Activated T-helper 2 cell treated with anti-CD3 and anti-CD28 coated beads, Interferon-gamma antibody, Interleukin-2, Interleukin-4, amounts not matched to agents 10 μg/mL and 5 μg/mL and 100 μg/mL, durations not matched to agents 14 hours and 24 hours and 36 hours (primary cell): ENCODE measurements at regions of chr6 and their contacts with region 1.

Region 1: DNA sequence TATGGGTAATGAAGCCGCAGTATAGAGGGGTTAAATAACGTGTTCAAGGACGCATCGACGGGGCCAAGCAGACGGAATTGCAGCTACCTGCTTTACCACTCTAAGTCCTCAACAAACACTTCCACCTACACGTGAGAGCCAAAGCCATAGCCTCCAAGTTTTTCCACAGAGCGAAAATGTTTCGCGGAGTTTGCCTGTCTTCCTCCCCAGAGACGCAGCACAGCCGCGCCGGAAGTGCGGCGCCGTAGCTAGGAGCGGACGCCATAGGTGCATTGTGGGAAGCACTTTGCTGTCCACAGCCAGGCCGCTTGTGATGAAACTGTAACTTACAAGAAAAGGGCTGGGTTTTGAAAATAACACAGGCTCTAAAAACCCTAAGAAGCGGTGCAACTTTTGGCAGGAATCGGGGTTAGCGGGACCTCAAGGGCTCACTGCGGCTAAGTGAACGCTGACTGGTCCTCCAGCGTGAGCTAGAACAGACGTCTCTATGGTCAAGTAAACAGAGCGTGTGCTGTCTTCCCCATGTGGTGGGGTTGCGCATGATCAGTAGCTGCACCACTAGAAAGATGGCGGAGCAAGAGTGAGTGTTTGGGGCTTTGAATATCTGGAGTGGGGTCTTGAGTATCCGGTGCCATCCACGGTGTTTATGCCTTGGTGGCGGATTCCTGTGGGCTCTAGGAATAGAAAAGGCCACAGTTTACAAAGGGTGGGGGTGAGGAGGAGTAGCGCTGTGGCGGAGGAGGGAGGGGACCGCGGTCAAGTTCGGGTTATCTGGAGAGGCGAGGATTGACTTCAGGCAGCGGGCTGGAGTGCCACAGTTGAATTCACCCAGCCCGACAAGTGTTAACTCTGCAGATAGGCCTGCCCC is at the start of gene RPL7L1:
- DNase-seq: peak; percentile 84
- H3K4me3 Mint-ChIP-seq: peak within 1 kb of the TSS; percentile 94
- H3K27ac Mint-ChIP-seq: peak within 1 kb of the TSS; percentile 98
- H3K4me1 Mint-ChIP-seq: peaks cover 6% of the 10 kb centered on the region
- H3K27me3 Mint-ChIP-seq: no peaks in the 10 kb centered on the region
- total RNA-seq, gene RPL7L1: 149 and 151 TPM in 2 replicates

Region 2: GRCh38 chr6:42563697-42564505 is 315.7 kb before region 1 on chr6 and contains the start of gene UBR2:
- intact Hi-C with region 1: loop called (anchors 2 kb)
- DNase-seq: peak; percentile 91
- H3K4me3 Mint-ChIP-seq: peak within 1 kb of the TSS; percentile 93
- H3K27ac Mint-ChIP-seq: peak within 1 kb of the TSS; percentile 87
- H3K4me1 Mint-ChIP-seq: peaks cover 26% of the 10 kb centered on the region
- H3K27me3 Mint-ChIP-seq: peaks cover 2% of the 10 kb centered on the region
- total RNA-seq, gene UBR2: 28.6 and 29.6 TPM in 2 replicates

Region 3: GRCh38 chr6:42661540-42662153 is 218.0 kb before region 1 on chr6:
- intact Hi-C with region 1: loop called (anchors 1 kb)
- DNase-seq: peak; percentile 74
- H3K4me3 Mint-ChIP-seq: no peak overlapping the region
- H3K27ac Mint-ChIP-seq: no peak overlapping the region
- H3K4me1 Mint-ChIP-seq: peaks cover 3% of the 10 kb centered on the region
- H3K27me3 Mint-ChIP-seq: no peaks in the 10 kb centered on the region

Region 4: GRCh38 chr6:42726485-42727086 is 153.0 kb before region 1 on chr6:
- intact Hi-C with region 1: loop called (anchors 1 kb)
- DNase-seq: peak; percentile 61
- H3K4me3 Mint-ChIP-seq: peak overlapping the region; percentile 81
- H3K27ac Mint-ChIP-seq: peak overlapping the region; percentile 98
- H3K4me1 Mint-ChIP-seq: peaks cover 19% of the 10 kb centered on the region
- H3K27me3 Mint-ChIP-seq: peaks cover 6% of the 10 kb centered on the region

Region 5: DNA sequence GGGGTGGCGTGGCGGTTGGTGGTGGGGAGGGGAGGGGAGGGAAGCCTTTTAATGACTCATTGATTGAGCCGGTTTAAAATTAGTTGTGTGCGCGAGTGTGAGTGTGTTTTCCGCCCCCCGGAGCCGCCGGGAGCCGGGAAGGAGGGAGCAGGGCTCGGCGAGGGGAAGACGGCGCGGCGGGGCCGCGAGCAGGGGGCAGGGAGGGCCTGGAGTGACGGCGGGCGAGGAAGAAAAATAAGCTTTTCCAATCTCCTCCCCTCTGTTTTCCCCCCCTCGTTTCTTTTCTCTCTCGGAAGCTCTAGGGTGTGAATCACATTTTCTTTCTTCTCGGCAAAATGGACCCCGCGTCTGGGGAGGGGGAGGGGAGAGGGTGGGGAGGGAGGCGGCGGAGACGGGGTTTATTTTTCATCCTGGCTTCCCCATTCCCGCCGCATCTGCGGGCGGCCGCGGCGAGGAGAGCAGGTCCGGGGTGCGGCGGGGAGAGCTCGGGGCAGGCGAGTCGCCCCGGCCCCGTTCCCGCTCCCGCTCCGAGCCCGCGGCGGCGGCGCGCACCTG is 96.9 kb before region 1 on chr6:
- intact Hi-C with region 1: loop called (anchors 1 kb)
- DNase-seq: peak; percentile 61
- H3K4me3 Mint-ChIP-seq: peak overlapping the region; percentile 87
- H3K27ac Mint-ChIP-seq: peak overlapping the region; percentile 99
- H3K4me1 Mint-ChIP-seq: peaks cover 33% of the 10 kb centered on the region
- H3K27me3 Mint-ChIP-seq: no peaks in the 10 kb centered on the region

Region 6: DNA sequence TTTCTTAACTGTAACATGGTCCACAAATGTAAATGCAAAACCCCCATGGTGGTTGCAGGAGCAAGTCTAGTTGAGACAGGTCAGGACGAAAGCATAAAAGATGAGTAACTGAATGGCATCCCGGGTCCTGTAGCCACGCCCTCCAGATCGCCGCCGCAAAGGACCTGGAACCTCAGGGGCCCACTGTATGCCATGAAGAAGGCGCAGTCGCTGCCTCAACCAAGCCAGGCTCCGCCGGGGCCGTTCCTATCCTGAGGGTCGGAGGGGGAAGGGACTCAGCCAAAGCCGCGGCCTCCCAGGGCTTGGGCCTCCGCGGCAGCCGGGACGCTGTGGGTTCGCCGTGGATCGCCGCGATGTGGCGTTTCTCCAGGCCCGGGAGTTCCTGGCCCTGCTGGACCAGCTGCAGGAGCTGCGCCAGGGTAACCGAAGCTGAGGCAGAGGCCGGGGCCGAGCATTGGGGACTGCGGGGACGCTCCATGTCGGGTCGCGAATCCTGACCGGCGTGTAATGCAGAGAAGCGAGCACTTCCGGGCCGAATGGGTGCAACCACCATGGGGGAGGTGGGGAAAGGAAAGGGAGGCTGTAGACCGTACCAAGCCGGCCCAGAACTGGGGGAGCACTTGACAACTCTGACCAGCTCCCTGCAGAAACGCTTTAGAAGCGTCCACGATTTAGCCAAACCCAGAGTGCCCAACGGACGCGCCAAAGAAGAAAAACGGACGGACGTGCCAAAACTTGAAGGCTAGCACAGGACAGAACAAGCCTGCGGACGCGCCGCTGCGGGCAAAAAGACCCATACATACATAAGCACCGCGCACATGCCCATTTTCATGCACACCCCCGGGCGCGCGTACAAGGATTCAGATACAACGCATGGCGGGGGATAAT is 10.9 kb after region 1 on chr6:
- intact Hi-C with region 1: loop called (anchors 1 kb)
- DNase-seq: peak; percentile 88
- H3K4me3 Mint-ChIP-seq: peak overlapping the region; percentile 86
- H3K27ac Mint-ChIP-seq: peak overlapping the region; percentile 96
- H3K4me1 Mint-ChIP-seq: peaks cover 16% of the 10 kb centered on the region
- H3K27me3 Mint-ChIP-seq: no peaks in the 10 kb centered on the region